Sigmoid colon (tissue), 7 donors: ENCODE measurements at regions of chr12 and their contacts with region 1.

Region 1: DNA sequence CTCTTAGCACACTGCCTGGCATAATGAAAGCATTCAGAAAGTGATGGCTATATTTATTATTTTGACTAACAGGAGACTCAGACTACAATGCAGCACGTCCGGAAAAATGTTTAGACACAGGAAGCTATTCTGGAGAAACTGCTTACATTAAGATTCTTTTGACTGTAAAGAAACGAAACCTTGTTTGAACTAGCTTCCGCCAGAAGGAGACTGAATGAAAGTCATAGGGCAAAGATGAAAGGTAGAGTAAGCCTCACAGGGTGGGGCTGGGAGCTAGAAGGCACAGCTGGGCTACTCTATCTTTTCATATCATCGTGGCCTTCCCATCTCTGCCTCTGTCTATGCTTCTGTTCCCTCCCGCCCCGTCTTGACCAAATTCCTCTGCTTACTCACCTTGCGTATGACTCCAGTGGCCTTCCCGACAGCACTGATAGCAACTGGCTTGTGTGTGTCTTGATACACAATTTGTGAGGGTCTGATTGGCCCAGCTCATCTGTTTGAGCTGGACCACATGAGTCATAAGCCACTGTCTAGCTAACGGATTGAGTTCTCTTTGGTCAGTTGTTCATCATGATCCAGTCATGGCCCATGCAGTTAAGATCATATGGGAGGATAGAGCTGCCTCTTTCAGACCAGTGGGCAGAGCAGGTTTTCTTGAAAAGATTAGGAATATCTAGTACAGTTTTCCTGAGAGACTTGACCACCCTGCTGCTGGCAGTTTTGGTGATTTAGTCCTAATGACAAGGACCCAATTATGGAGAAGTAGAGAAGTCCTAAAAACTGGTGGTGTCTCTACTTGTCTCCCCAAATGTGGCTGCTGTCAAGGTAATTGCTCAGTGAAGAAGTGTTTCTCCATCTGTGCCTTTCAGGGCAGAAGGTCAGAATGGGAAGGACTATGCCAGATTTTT is 151.5 kb upstream of the SLC38A2 start:
- DNase-seq: no peak
- H3K4me3 ChIP-seq: no peak overlapping the region
- H3K27ac ChIP-seq: peak overlapping the region; percentile 68 to 84 (median 80)
- H3K4me1 ChIP-seq: peaks cover 0 to 48% (median 43%) of the 10 kb centered on the region in 4 donors
- H3K27me3 ChIP-seq: no peaks in the 10 kb centered on the region
- CTCF ChIP-seq: no peak
- EP300 ChIP-seq: no peak
- POLR2A ChIP-seq: no peak

Region 2: GRCh38 chr12:46556105-46556559 is 32.0 kb after region 1 on chr12:
- intact Hi-C with region 1: loop called (anchors 2 kb)
- DNase-seq: no peak
- H3K4me3 ChIP-seq: no peak overlapping the region
- H3K27ac ChIP-seq: peak overlapping the region; percentile 35 to 82 (median 72)
- H3K4me1 ChIP-seq: peaks cover 0 to 71% (median 44%) of the 10 kb centered on the region in 4 donors
- H3K27me3 ChIP-seq: no peaks in the 10 kb centered on the region
- CTCF ChIP-seq: no peak
- EP300 ChIP-seq: peak in 1 of 4 donors; percentile 72
- POLR2A ChIP-seq: no peak